ENCODE measurements at regions of chr11 and their contacts with region 1.

Region 1: GRCh38 chr11:102920118-102920684 is 35.3 kb downstream of the MMP13 start:
- DNase-seq: peak; percentile 65 to 91 (median 86)
- H3K4me3 ChIP-seq: peak overlapping the region in 5 of 7 experiments; percentile 12 to 55 (median 12)
- H3K27ac ChIP-seq: no peak overlapping the region
- H3K4me1 ChIP-seq: peaks cover 7 to 41% (median 17%) of the 10 kb centered on the region in 4 experiments
- H3K27me3 ChIP-seq: peaks cover 0 to 18% (median 4%) of the 10 kb centered on the region in 5 experiments

Region 2: DNA sequence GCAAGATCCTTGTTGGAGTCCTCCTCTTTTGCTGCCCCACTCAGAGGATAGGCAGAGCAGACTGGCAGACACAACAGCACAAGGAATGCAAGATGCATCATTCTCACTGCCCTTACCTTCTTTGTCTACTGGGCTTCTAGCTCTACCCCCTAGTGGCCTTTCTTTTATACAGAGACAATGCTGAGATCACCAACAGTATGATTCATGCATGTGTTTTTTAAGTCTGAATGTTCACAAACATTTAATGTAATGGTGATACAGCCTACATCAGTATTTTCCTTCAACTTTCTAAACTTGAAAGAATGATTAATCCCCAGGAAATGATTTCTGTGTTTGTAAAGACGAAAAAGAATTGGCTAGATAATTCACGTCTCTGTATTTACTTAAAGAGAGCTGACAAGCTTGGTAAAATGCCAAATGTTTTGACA is 139.7 kb before region 1 on chr11 and contains the start of gene MMP10:
- CTCF ChIA-PET with region 1: no interaction called
- POLR2A ChIA-PET with region 1: no interaction called
- DNase-seq: peak; percentile 10 to 45 (median 39)
- H3K4me3 ChIP-seq: no peak within 1 kb of the TSS
- H3K27ac ChIP-seq: no peak within 1 kb of the TSS
- H3K4me1 ChIP-seq: no peaks in the 10 kb centered on the region
- H3K27me3 ChIP-seq: peaks cover 0 to 4% (median 0%) of the 10 kb centered on the region in 5 experiments

Region 3: DNA sequence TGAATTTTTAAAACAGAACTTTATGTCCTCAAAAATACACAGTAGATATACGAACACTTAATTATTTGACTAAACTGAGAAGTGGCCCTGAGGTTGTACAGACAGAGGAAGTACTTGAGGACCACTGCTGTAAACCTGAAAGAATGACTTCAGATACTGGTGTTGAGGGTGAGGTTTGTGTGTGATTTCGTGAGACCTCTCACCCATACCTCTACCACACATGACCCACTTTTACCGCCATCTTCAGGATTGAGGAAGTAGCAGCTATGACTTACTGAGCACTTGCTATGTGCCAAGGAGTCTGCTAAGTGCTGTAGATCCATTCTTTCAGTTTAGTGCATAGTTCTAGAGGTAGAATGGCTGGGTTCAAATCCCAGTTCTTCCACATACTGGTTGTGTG is 13.4 kb after region 1 on chr11:
- CTCF ChIA-PET with region 1: interaction called, 27 read pairs
- POLR2A ChIA-PET with region 1: no interaction called
- DNase-seq: peak in 2 of 3 donors; percentile 40 to 46
- H3K4me3 ChIP-seq: no peak overlapping the region
- H3K27ac ChIP-seq: no peak overlapping the region
- H3K4me1 ChIP-seq: no peaks in the 10 kb centered on the region
- H3K27me3 ChIP-seq: peaks cover 0 to 18% (median 5%) of the 10 kb centered on the region in 5 experiments

Region 4: DNA sequence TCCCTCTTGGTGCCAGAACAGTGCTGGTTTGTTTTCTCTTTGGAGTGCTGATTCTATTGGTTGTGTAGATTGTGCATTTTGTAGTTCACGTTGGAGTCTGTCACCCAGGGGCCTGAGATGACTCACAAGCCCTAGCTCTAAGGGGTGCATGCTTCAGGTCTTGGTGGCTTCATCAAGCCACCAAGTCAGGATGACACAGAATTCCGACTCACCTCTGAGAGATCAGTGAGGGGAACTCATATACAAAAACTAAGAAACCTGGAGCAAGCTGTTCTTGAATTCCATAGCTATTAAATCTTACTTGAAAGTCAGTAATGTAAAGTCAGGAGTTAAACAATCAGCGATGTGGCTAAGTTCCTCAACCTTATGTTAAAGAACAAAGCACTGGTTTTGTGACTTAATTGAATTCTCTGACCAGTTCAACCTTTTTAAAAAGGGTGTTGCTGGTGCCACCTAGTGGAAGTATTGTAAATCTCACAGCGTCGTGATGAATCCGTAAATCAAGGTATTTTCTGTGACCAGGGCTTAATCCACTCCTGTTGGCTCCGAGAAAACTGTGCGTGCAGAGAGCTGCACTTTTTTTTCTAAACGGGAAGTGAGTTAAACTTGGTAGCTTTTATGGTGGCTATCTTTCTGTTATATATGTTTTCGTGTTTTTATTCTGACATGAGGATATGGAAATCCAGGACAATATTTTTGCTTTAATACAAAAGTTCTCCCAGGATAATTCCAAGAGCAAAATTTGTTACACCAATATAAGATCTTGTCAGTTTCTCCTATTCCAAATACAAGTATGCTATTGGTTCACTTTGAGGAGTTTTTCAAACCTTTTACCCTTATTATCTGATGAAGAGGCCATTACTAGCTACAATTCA is 20.8 kb after region 1 on chr11:
- CTCF ChIA-PET with region 1: interaction called, 80 read pairs
- POLR2A ChIA-PET with region 1: interaction called, 4 read pairs
- DNase-seq: peak; percentile 77 to 89 (median 84)
- H3K4me3 ChIP-seq: no peak overlapping the region
- H3K27ac ChIP-seq: no peak overlapping the region
- H3K4me1 ChIP-seq: peaks cover 0 to 2% (median 0%) of the 10 kb centered on the region in 4 experiments
- H3K27me3 ChIP-seq: peaks cover 0 to 3% (median 0%) of the 10 kb centered on the region in 5 experiments

Region 5: DNA sequence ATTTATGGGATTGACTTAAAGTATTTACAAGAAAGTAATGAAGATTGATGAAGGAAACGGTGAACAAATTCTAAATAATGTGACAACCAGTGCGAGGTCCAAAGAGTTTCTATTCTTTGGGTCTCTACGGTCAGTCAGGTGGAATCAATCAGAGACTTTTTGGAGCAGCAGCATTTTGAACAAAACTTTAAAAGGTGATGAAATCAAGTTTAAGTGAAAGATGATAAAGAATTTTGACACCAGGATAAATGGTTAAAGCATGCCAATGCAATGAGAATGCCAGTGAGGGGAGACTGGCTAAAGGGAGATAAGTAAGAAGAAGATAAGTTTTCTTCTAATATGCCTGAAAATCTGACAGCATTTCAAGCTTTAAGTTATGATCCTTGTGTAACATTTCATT is 103.9 kb after region 1 on chr11:
- CTCF ChIA-PET with region 1: no interaction called
- POLR2A ChIA-PET with region 1: no interaction called
- DNase-seq: no peak
- H3K4me3 ChIP-seq: no peak overlapping the region
- H3K27ac ChIP-seq: no peak overlapping the region
- H3K4me1 ChIP-seq: no peaks in the 10 kb centered on the region
- H3K27me3 ChIP-seq: peaks cover 0 to 2% (median 0%) of the 10 kb centered on the region in 5 experiments

Region 6: DNA sequence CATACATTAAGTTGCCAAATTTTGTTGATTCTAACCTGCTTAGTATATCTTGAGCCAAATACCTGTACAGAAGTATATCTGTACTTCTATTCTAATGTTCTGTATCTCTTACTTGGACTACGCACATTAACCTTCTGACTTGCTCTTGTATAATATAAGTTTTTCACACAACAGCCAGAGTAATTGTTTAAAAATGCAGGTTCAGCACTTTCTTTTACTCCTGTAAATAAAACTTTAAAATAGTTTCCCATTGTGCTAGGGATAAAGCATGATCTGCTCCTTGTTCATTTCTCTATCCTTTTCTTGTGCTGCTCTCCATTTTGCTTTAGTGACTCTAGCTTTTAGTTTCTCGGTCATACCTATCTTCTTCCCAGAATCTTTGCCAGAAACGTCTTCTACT is 237.3 kb after region 1 on chr11:
- CTCF ChIA-PET with region 1: no interaction called
- POLR2A ChIA-PET with region 1: no interaction called
- DNase-seq: no peak
- H3K4me3 ChIP-seq: no peak overlapping the region
- H3K27ac ChIP-seq: no peak overlapping the region
- H3K4me1 ChIP-seq: no peaks in the 10 kb centered on the region
- H3K27me3 ChIP-seq: no peaks in the 10 kb centered on the region

Measured in common myeloid progenitor, CD34-positive (primary cell).